Head of caudate nucleus (tissue), 42 donors: ENCODE measurements at regions of chr2 and their contacts with region 1.

Region 1: DNA sequence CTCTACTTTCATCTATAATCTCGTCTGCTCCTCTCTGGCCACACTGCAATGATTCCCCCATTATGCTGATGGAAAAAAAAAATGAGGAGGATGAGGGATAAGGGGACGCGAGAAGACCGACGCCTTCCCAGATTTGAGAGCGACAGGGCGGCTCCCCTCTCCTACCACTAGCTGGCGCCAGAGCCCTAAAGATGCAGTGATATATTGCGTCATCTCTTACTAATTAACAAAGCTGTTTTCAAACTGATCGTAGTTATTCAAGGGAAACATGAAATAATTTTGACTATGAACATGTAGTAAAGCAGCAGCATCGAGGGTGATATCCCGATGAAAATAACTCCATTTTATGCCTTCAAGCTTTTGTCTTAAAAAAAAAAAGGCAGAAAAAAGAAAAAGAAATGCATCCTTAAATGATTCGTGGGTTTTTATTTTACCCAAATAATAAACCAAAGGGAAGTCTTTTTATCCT is 48.0 kb upstream of the HNRNPA3 start:
- DNase-seq: peak; percentile 81 to 96 (median 90)

Region 2: DNA sequence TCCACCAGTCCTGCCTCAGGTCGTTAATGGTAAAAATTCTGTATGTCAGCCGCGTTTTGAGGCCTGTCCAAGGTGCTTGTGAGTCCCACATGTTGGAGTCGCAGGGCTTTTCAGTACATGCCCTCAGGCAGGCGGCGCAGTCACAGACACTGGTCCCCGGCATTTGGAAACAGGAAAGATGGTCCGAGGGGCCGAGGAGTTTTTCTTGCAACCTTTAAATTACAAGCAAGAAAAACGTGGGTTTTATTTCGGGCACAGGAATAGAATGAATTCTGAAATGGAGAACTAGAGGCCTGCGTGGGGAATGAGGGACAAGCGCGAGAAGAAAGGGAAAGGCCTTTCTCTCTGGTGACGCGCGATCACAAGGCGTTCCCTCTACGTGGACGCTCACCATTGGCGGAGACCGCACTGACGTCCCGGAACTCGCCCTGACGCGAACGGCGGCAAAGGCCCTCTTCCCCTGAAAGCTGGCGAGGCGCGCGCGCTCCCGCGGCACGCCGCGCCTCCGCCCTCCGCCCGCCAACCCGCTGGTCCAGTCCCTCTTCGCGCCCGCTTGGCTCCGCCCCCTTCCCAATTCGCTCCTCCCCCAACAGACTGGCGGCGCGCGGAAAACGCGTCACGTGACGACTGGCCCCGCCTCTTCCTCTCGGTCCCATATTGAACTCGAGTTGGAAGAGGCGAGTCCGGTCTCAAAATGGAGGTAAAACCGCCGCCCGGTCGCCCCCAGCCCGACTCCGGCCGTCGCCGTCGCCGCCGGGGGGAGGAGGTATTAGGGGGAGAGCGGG is 47.7 kb after region 1 on chr2 and contains the start of gene HNRNPA3:
- intact Hi-C with region 1: loop called (anchors 2 kb)
- DNase-seq: peak; percentile 98 to 100 (median 99)